Activated CD4-positive, alpha-beta T cell treated with anti-CD3 and anti-CD28 coated beads for 36 hours (primary cell): ENCODE measurements at regions of chr12 and their contacts with region 1.

Region 1: DNA sequence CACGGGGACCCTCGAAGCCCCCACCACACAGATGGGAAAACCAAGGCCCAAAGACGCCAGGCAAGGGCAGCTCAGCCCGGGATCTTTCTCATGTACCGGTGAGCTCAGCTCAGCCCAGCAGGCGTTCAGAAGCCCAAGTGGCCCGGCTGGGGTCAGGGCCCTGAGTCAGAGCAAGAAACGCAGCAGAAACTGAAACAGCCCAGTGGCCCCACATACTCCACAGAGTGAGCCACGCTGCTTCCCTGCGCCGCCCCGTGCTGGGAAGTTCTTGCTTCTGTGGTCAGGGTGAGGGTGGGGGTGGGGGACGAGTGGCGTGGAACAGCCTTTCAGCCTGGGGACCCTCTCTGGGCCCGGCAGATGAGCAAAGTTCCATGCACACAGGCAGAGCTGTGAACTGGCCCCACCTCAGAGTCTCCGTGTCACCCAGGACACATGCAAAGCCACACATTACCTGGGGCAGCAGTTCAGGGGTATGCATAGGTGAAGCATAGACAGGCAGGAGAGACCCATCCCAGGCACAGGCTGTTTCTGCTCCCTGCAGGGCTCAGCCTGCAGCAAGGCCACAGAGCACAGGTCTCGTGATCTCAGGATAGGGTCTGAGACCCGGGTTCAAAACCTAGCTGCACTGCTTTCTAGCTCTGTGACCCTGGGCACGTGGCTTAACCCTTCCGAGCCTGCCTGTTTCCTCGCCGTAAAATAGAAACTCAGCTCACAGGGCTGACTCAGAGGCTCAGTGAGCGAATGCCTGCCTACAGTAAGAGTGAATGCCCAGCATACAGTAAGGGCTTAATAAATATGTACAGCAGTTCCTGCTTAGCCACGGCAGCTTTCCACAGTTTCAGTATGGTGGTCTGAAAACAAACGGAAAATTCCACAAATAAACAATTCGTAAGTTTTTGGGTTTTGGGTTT is 21.6 kb downstream of the NCOR2 start:
- DNase-seq: peak; percentile 85
- ATAC-seq: peak; percentile 84
- H3K4me3 Mint-ChIP-seq: peak overlapping the region; percentile 31
- H3K27ac Mint-ChIP-seq: peak overlapping the region; percentile 37
- H3K4me1 Mint-ChIP-seq: peaks cover 70% of the 10 kb centered on the region
- H3K27me3 Mint-ChIP-seq: no peaks in the 10 kb centered on the region

Region 2: GRCh38 chr12:124388679-124389536 is 156.9 kb before region 1 on chr12:
- CTCF ChIA-PET with region 1: no interaction called
- POLR2A ChIA-PET with region 1: no interaction called
- intact Hi-C with region 1: loop called in 1 of 2 experiments (anchors 5 kb)
- DNase-seq: peak; percentile 86
- ATAC-seq: peak; percentile 79
- H3K4me3 Mint-ChIP-seq: peak overlapping the region; percentile 44
- H3K27ac Mint-ChIP-seq: no peak overlapping the region
- H3K4me1 Mint-ChIP-seq: peaks cover 43% of the 10 kb centered on the region
- H3K27me3 Mint-ChIP-seq: no peaks in the 10 kb centered on the region

Region 3: DNA sequence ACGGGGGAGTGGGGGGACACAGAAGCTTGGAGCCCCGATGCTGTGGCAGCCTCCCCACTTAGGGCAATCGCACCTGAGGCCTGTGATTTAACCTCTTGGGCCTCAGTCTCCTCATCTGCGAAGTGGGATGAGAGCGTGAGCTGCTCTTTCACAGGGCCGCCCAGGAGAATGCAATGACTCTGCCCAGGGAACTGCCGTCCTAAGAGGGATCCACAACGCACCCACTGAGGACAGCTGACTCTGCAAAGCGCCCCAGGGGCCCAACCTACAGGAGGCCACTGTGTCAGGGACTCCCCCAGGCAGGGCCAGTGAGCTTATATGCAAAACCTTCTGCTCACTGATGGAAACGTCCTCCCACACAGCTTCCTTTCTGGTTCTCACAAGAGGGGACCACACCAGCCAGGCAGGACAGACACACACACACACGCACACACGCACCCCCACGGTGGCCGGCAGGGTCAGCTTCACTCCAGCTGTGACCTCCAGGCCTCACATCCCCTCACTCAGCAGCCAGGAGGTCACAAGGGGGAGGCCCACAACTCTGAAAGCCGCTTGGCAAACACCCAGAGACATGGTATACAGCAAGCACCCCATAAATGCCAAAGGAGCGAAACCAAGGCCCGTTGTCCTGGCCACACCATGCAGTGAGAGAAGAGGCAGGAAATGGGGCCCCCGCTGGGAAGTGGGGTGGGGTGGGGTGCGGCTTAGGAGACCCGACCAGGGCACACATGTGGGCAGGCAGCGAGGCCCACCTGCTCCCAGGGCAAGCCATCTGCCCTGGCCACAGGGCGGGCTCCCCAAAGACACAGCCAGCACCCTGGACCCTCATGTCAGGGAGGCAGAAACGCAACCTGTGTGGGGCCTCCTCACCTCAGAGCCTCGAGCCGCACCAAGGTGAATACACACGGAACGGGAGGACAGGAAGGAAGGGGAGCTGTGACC is 51.7 kb before region 1 on chr12:
- CTCF ChIA-PET with region 1: no interaction called
- POLR2A ChIA-PET with region 1: no interaction called
- intact Hi-C with region 1: loop called (anchors 5 kb)
- DNase-seq: peak; percentile 84
- ATAC-seq: peak; percentile 96
- H3K4me3 Mint-ChIP-seq: peak overlapping the region; percentile 25
- H3K27ac Mint-ChIP-seq: peak overlapping the region; percentile 91
- H3K4me1 Mint-ChIP-seq: peaks cover 48% of the 10 kb centered on the region
- H3K27me3 Mint-ChIP-seq: no peaks in the 10 kb centered on the region

Region 4: GRCh38 chr12:124567661-124568373 is 22.1 kb after region 1 on chr12:
- CTCF ChIA-PET with region 1: interaction called, 4 read pairs
- POLR2A ChIA-PET with region 1: interaction called, 3 read pairs
- intact Hi-C with region 1: loop called (anchors 1 to 2 kb)
- DNase-seq: peak; percentile 89
- ATAC-seq: peak; percentile 72
- H3K4me3 Mint-ChIP-seq: peak overlapping the region; percentile 75
- H3K27ac Mint-ChIP-seq: peak overlapping the region; percentile 89
- H3K4me1 Mint-ChIP-seq: peaks cover 33% of the 10 kb centered on the region
- H3K27me3 Mint-ChIP-seq: no peaks in the 10 kb centered on the region